GM13976 (cell line): ENCODE measurements at regions of chr16 and their contacts with region 1.

Region 1: GRCh38 chr16:25126820-25127232 is 15.3 kb downstream of the LCMT1 start:
- DNase-seq: peak; percentile 41
- CTCF ChIP-seq: peak; percentile 56

Region 2: GRCh38 chr16:25051406-25052150 is 75.2 kb before region 1 on chr16:
- in situ Hi-C with region 1: loop called (anchors 5 kb)
- DNase-seq: no peak
- CTCF ChIP-seq: no peak

Region 3: GRCh38 chr16:25224731-25225319 is 98.0 kb after region 1 on chr16:
- in situ Hi-C with region 1: loop called (anchors 10 kb)
- DNase-seq: no peak
- CTCF ChIP-seq: no peak